Naive thymus-derived CD4-positive, alpha-beta T cell (primary cell): ENCODE measurements at regions of chr2 and their contacts with region 1.

Region 1: GRCh38 chr2:154686179-154686578 is 12.3 kb upstream of the KCNJ3 start:
- DNase-seq: no peak
- ATAC-seq: no peak
- H3K4me3 ChIP-seq: no peak overlapping the region
- H3K4me3 Mint-ChIP-seq: no peak overlapping the region
- H3K27ac ChIP-seq: no peak overlapping the region
- H3K27ac Mint-ChIP-seq: no peak overlapping the region
- H3K4me1 ChIP-seq: no peaks in the 10 kb centered on the region
- H3K4me1 Mint-ChIP-seq: no peaks in the 10 kb centered on the region
- H3K27me3 ChIP-seq: no peaks in the 10 kb centered on the region
- H3K27me3 Mint-ChIP-seq: no peaks in the 10 kb centered on the region

Region 2: GRCh38 chr2:153451631-153452030 is 1234.5 kb before region 1 on chr2:
- CTCF ChIA-PET with region 1: no interaction called
- POLR2A ChIA-PET with region 1: no interaction called
- intact Hi-C with region 1: no loop called
- DNase-seq: no peak
- ATAC-seq: no peak
- H3K4me3 ChIP-seq: no peak overlapping the region
- H3K4me3 Mint-ChIP-seq: no peak overlapping the region
- H3K27ac ChIP-seq: no peak overlapping the region
- H3K27ac Mint-ChIP-seq: no peak overlapping the region
- H3K4me1 ChIP-seq: no peaks in the 10 kb centered on the region
- H3K4me1 Mint-ChIP-seq: no peaks in the 10 kb centered on the region
- H3K27me3 ChIP-seq: no peaks in the 10 kb centered on the region
- H3K27me3 Mint-ChIP-seq: peaks cover 0 to 16% (median 3%) of the 10 kb centered on the region in 5 donors

Region 3: GRCh38 chr2:154402218-154402617 is 284.0 kb before region 1 on chr2:
- CTCF ChIA-PET with region 1: no interaction called
- POLR2A ChIA-PET with region 1: no interaction called
- intact Hi-C with region 1: loop called in 1 of 2 experiments (anchors 5 kb)
- DNase-seq: peak in 4 of 9 donors; percentile 7 to 28 (median 15)
- ATAC-seq: no peak
- H3K4me3 ChIP-seq: no peak overlapping the region
- H3K4me3 Mint-ChIP-seq: no peak overlapping the region
- H3K27ac ChIP-seq: no peak overlapping the region
- H3K27ac Mint-ChIP-seq: no peak overlapping the region
- H3K4me1 ChIP-seq: no peaks in the 10 kb centered on the region
- H3K4me1 Mint-ChIP-seq: peaks cover 0 to 7% (median 0%) of the 10 kb centered on the region in 7 donors
- H3K27me3 ChIP-seq: no peaks in the 10 kb centered on the region
- H3K27me3 Mint-ChIP-seq: no peaks in the 10 kb centered on the region

Region 4: DNA sequence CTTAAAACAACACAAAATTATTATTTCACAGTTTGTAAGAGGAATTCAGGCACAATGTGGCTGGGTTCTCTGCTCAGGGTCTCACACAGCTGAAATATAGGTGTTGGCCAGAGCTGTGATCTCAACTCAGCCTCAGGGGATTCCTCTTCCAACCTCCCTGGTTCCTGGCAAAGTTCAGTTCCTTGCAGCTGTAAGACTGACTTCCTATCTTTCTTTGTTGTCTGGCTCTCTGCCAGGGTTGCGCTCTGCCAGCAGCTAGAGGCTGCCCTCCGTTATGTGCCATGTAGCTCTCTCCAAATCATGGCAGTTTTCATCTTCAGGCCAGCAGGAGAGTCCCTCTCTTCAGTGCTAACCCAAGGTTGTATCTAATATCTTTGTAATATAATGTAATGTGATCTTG is 260.2 kb before region 1 on chr2:
- CTCF ChIA-PET with region 1: no interaction called
- POLR2A ChIA-PET with region 1: no interaction called
- intact Hi-C with region 1: no loop called
- DNase-seq: no peak
- ATAC-seq: no peak
- H3K4me3 ChIP-seq: no peak overlapping the region
- H3K4me3 Mint-ChIP-seq: no peak overlapping the region
- H3K27ac ChIP-seq: no peak overlapping the region
- H3K27ac Mint-ChIP-seq: no peak overlapping the region
- H3K4me1 ChIP-seq: no peaks in the 10 kb centered on the region
- H3K4me1 Mint-ChIP-seq: peaks cover 0 to 32% (median 9%) of the 10 kb centered on the region in 7 donors
- H3K27me3 ChIP-seq: no peaks in the 10 kb centered on the region
- H3K27me3 Mint-ChIP-seq: no peaks in the 10 kb centered on the region